ENCODE measurements at regions of chr6 and their contacts with region 1.

Region 1: DNA sequence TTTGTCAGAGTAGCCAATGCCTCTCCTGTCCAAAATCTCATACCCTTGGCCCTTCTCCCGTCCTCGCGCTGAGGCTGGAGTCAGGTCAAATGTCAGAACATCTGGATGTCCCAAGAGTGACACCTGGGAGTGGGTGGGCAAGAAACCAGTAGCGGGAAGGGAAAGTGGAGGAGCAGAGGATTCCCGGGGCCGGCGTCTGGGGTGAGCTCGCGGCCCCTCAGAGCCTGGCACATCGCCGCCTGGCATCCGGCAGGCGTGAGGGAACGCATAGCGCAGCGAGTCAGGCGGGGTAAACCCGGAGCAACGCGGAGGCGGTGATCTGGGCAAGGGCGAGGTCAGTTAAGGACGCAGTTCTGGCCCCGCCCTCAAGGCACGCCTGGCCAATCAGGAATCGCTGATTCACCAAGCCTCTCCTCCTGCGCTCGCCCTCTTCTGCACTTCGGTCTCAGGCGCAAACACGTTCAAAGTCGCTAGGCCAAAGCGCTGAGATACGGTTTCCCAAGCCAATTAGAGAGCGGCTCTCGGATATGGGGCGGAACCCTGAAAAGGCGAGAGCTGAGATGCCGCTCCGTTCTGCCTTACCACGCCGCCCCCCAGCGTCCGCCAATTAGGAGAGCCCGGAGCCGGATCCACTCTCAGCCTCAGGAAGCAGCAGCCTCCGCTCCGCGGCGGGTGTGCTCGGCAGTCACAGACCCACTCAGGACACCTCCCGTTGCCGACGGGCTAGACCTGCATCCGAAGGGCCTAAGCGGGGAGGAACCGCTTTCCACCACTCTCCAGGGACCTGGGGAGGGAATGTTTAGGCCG is 22.5 kb downstream of the VPS52 start:
- DNase-seq: peak; percentile 99 to 100 (median 100)
- H3K4me3 ChIP-seq: peak overlapping the region; percentile 70 to 86 (median 74)
- H3K27ac ChIP-seq: peak overlapping the region; percentile 89 to 94
- H3K4me1 ChIP-seq: peaks cover 10 to 27% (median 25%) of the 10 kb centered on the region in 4 experiments
- H3K27me3 ChIP-seq: peaks cover 0 to 2% (median 0%) of the 10 kb centered on the region in 5 experiments

Region 2: GRCh38 chr6:33118525-33119123 is 130.5 kb before region 1 on chr6:
- CTCF ChIA-PET with region 1: interaction called, 20 read pairs
- POLR2A ChIA-PET with region 1: no interaction called
- DNase-seq: peak; percentile 65 to 79 (median 79)
- H3K4me3 ChIP-seq: no peak overlapping the region
- H3K27ac ChIP-seq: no peak overlapping the region
- H3K4me1 ChIP-seq: peaks cover 13 to 33% (median 18%) of the 10 kb centered on the region in 4 experiments
- H3K27me3 ChIP-seq: peaks cover 3 to 20% (median 16%) of the 10 kb centered on the region in 5 experiments

Region 3: DNA sequence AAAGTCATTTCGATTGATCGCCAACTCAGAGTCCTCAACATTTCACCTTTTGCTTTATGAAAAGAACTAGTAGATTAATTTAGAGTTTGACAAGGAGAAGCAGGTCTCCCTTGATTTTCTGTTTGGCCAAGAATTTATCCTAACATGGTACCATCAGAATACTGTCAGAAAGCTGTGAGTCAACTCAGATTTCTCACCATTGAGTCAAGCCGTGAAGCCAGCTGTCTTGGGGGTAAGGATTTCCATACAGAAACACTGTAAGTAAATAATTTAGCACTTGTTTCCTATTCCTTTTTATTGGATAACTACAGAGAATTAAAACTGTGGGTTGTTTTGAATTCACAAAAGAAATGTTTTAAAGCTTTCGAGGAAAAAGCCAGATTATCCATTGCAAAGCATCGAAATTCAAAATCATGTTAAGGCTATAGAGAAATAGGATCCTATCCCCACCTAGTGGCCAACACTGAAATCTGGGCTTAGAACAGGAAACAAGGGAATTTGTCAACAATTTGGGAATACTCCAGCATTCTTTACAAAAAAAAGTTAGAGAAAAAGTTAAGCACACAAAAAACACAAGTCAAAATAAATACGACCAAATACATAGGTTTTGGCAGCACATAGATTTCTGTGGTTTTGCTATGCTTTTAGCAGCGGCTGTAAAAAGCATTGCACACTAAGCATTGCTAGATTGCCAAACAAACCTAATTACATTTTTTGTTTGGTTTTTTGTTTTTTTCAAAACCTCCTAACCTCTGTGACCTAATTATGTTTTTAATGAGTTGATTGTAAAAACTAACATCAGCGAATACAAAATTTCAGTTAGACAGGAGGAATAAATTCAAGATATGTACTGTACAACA is 101.1 kb before region 1 on chr6:
- CTCF ChIA-PET with region 1: interaction called, 12 read pairs
- POLR2A ChIA-PET with region 1: no interaction called
- DNase-seq: peak; percentile 38 to 52 (median 40)
- H3K4me3 ChIP-seq: no peak overlapping the region
- H3K27ac ChIP-seq: no peak overlapping the region
- H3K4me1 ChIP-seq: peaks cover 0 to 13% (median 10%) of the 10 kb centered on the region in 4 experiments
- H3K27me3 ChIP-seq: no peaks in the 10 kb centered on the region

Region 4: DNA sequence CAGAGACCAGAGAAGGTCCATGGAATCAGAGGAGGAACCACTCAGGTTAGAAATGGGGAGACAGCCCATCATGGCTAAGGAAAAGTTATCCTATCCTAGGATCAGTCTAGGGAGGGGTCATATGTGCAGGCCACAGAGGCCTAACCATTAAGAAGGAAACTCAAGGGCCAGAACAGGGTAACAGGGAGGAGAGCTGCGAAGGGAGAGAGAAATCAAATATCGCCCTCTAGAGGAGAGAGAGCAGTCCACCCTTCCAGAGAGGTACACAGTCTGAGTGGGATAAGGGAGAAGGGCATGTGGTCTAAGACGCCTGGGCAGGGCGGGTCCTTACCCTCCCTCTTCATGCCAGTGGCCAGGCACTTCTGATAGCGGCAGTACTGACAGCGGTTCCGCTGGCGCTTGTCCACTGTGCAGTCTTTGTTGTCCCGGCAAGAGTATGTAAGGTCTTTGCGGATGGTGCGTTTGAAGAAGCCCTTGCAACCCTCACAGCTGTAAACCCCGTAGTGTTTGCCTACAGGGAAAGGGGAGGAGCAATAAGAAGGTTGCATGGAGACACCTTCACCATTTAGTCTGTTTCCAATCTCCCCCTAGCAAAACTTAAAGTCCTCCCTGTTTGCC is 51.6 kb before region 1 on chr6:
- CTCF ChIA-PET with region 1: interaction called, 10 read pairs
- POLR2A ChIA-PET with region 1: no interaction called
- DNase-seq: peak; percentile 69 to 78 (median 77)
- H3K4me3 ChIP-seq: no peak overlapping the region
- H3K27ac ChIP-seq: peak overlapping the region in 1 of 2 experiments; percentile 37
- H3K4me1 ChIP-seq: peaks cover 7 to 45% (median 36%) of the 10 kb centered on the region in 4 experiments
- H3K27me3 ChIP-seq: peaks cover 0 to 5% (median 0%) of the 10 kb centered on the region in 5 experiments

Region 5: GRCh38 chr6:33235221-33235634 is 13.9 kb before region 1 on chr6:
- CTCF ChIA-PET with region 1: interaction called, 15 read pairs
- POLR2A ChIA-PET with region 1: no interaction called
- DNase-seq: no peak
- H3K4me3 ChIP-seq: no peak overlapping the region
- H3K27ac ChIP-seq: no peak overlapping the region
- H3K4me1 ChIP-seq: no peaks in the 10 kb centered on the region
- H3K27me3 ChIP-seq: peaks cover 0 to 7% (median 0%) of the 10 kb centered on the region in 5 experiments

Region 6: GRCh38 chr6:33271458-33272274 is 22.5 kb after region 1 on chr6 and contains the starts of genes RPS18 and VPS52:
- CTCF ChIA-PET with region 1: interaction called, 9 read pairs
- POLR2A ChIA-PET with region 1: interaction called, 10 read pairs
- DNase-seq: peak; percentile 100
- H3K4me3 ChIP-seq: peak within 1 kb of the TSS; percentile 72 to 95 (median 83)
- H3K27ac ChIP-seq: peak within 1 kb of the TSS; percentile 96 to 99
- H3K4me1 ChIP-seq: peaks cover 7 to 56% (median 45%) of the 10 kb centered on the region in 4 experiments
- H3K27me3 ChIP-seq: no peaks in the 10 kb centered on the region

Measured in common myeloid progenitor, CD34-positive (primary cell).